Activated CD4-positive, alpha-beta memory T cell treated with anti-CD3 and anti-CD28 coated beads, Interleukin-2, amount 10 ng/mL, durations not matched to agents 7 days and 5 days (primary cell): ENCODE measurements at regions of chr6 and their contacts with region 1.

Region 1: DNA sequence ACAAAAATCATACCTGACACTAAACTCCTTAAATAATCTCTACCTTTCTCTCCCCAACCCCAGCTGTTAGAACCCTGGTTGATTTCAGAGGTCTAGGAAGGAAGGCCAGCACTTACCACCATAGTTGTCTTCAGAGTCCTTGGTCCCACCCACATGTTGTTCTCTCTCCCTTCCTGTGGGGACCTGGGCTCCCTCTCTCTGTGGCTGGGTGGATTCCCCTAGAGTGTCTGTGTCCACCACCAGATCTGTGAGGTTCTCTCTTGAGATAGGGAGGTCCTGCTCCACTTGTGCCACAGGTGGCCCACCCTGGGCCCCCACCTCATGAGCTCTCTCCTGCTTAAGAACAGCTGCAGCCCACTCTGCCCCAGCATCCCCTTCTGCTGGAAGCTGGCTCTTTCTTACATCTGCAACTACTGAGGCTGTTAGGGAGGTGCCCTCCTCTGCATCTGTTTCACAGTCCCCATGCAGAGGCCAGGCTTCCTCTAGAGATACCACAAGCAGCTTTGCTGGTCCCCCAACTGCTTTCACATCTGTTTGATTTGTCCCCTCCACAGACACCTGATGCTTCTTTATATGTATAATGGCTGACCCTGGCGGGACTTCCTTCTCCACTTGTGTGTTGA is 5.2 kb downstream of the MDC1 start:
- DNase-seq: peak; percentile 28
- H3K4me3 Mint-ChIP-seq: peak overlapping the region; percentile 2
- H3K27ac Mint-ChIP-seq: peak overlapping the region; percentile 79
- H3K4me1 Mint-ChIP-seq: peaks cover 59% of the 10 kb centered on the region
- H3K27me3 Mint-ChIP-seq: no peaks in the 10 kb centered on the region

Region 2: DNA sequence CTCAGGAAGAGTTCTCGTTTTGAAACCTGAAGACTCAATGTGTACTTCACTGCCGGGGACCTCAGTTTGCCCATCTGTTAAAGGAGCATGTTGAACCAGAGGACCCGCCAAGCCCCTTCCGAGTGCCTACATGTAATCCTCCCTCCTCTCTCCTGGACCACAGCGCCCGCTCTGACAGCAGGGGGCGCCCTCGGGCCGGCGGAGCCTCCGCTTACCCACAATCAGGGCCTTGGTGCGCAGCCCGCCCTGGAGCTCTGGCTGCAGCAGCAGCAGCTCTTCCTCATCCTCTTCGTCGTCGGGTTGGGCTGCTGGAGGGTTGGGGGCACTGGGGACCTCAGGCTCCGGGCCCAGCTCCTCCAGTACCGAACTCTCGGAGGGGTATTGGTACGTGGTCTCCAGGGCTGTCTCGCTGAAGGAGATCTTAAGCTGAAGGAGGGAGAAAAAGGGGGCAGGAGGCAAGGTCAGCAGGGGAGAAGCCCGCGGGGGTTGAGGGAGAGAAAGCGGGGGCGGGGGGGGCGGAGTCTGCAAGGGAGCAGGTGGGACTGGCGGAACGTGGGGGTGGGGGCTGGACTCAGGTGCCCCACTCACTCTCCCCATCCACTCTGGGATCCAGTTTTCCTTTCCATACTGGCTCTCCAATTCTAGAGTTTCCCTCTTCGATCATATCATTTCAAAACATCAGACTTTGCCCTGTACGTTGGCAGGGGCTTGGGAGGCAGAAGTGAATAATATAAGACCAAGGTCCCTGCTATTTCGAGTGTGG is 32.7 kb before region 1 on chr6:
- CTCF ChIA-PET with region 1: interaction called, 626 read pairs
- POLR2A ChIA-PET with region 1: interaction called, 561 read pairs
- DNase-seq: peak; percentile 93
- H3K4me3 Mint-ChIP-seq: peak overlapping the region; percentile 93
- H3K27ac Mint-ChIP-seq: peak overlapping the region; percentile 95
- H3K4me1 Mint-ChIP-seq: peaks cover 35% of the 10 kb centered on the region
- H3K27me3 Mint-ChIP-seq: no peaks in the 10 kb centered on the region

Region 3: GRCh38 chr6:30686908-30687658 is 24.8 kb before region 1 on chr6:
- CTCF ChIA-PET with region 1: interaction called, 626 read pairs
- POLR2A ChIA-PET with region 1: interaction called, 561 read pairs
- DNase-seq: peak; percentile 85
- H3K4me3 Mint-ChIP-seq: peak overlapping the region; percentile 93
- H3K27ac Mint-ChIP-seq: peak overlapping the region; percentile 94
- H3K4me1 Mint-ChIP-seq: peaks cover 42% of the 10 kb centered on the region
- H3K27me3 Mint-ChIP-seq: no peaks in the 10 kb centered on the region

Region 4: DNA sequence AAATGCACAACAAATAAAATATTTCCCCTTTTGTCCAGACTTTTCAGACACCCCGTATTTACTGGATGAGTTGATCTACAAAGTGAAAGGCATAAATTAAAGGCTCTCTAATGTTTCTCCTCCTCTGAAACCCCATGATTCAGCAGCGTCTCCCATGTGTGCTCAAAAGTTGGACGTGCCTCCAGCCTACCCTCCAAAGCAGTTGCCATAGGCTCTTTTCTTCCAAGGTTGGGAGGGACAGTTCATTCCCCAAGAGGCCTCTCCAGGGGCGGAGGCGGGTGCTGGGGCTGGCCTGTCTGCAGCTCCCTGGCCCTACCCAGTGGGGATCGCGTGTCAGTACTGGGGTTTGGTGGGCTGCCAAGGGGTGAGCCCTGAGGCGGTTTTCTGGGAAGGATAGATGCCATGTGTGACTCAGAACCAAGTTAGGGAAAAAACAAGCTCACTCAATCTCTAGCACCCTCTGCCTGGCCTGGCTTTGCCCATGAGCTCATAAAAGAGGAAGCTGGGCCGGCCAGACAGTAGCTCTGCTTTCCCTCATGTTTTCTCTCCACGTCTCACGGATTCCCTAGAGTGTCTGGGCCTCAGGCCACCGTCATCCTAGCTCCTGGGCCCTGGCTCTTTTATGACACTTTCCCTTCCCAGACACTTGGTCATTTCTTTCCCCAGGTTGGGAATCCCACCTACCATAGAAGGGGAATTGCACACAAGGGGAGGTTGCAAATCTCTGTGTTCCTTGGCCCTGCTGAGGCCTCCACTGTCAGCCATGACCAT is 40.5 kb after region 1 on chr6:
- CTCF ChIA-PET with region 1: no interaction called
- POLR2A ChIA-PET with region 1: no interaction called
- DNase-seq: no peak
- H3K4me3 Mint-ChIP-seq: no peak overlapping the region
- H3K27ac Mint-ChIP-seq: no peak overlapping the region
- H3K4me1 Mint-ChIP-seq: peaks cover 3% of the 10 kb centered on the region
- H3K27me3 Mint-ChIP-seq: peaks cover 3% of the 10 kb centered on the region

Region 5: DNA sequence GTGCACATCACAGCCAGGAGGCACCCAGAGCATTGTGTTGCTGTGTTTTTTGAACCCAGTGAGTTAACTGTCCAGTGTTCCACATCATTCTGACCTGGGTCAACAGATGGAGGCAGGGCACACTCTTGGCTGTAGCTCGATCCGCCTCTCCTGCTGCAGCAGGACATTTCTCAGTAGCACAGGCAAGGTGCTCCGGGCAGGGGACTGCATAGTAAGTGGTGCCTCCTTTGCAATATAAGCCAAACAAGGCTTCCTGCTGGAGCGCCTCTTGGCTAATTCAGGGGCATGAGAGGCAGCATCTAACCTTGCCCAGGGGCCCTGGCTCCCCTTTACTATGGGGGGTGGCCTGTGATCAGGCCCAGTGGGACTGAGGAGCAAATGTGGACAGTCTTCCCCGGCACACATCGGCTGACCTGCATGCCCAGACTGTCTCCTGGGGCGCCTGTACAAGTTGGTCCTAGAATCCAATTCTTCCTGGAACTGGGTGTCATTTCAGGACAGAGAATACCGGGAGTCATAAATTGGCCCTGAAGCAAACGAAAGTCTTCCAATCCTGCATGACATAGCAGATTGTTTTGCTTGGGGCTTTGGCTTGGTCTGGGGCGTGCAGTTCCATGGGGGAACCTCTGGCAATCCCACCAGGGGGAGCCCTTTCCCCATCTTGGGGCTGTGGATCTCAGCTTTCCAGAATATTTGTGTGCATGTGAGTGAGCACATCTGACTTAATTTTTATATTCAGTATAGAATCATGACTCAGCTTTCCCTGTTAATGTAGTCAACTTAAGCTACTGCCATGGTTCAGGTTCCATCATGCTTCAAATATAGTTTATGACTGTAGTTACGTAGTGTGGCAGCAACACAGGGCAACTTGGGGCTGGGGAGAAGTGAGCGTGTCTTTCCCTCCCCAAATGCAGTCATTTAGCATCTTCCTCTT is 116.4 kb after region 1 on chr6:
- CTCF ChIA-PET with region 1: no interaction called
- POLR2A ChIA-PET with region 1: no interaction called
- DNase-seq: peak; percentile 79
- H3K4me3 Mint-ChIP-seq: peak overlapping the region; percentile 86
- H3K27ac Mint-ChIP-seq: peak overlapping the region; percentile 66
- H3K4me1 Mint-ChIP-seq: peaks cover 57% of the 10 kb centered on the region
- H3K27me3 Mint-ChIP-seq: no peaks in the 10 kb centered on the region

Region 6: DNA sequence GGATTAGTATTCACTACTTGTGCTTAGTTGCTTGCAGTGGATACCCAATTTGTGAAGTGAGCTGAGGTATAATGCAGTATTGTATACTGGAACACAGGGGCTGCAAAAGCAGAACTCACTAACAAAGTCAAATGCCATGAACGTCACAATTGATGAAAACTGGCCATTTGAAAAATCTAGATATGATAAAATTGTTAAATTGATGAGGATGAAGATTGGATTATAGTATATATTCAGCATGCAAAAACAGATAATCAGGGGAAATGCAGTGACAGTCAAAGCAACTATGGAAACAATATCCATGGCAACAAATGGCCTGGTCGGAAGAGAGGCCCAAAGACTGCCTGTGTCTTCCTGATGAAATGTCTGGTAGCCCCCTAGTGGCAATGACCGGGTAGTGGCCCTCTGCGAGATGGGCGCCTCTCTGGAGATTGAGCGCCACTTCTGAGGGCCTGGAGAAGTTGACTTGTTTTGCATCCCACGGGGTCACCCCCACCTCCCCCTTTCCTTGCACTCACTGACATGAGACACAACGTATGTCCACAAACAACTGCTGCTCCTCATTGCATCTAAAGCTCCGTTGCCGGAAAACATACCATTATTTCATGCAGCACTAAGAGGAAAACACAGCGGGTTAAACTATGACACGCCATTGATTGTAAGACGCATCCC is 356.9 kb after region 1 on chr6:
- CTCF ChIA-PET with region 1: no interaction called
- POLR2A ChIA-PET with region 1: no interaction called
- DNase-seq: peak; percentile 67
- H3K4me3 Mint-ChIP-seq: no peak overlapping the region
- H3K27ac Mint-ChIP-seq: no peak overlapping the region
- H3K4me1 Mint-ChIP-seq: no peaks in the 10 kb centered on the region
- H3K27me3 Mint-ChIP-seq: peaks cover 7% of the 10 kb centered on the region